PC-3 (cell line): ENCODE measurements at regions of chr15 and their contacts with region 1.

Region 1: DNA sequence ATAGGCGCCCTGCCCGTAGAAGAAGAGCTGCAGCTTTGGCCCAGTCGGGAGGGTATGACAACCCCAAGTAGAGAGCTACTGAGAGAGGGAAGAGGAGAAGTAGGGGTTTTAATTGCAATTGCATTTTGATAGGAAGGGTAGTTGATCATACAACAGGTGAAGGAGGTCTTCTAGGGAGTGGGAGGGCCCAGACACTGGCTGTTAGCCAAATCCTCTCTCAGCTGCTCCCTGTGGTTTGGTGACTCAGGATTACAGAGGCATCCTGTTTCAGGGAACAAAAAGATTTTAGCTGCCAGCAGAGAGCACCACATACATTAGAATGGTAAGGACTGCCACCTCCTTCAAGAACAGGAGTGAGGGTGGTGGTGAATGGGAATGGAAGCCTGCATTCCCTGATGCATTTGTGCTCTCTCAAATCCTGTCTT is 408.9 kb upstream of the THBS1 start:
- DNase-seq: peak; percentile 98
- ATAC-seq: peak; percentile 99
- H3K4me3 ChIP-seq: no peak overlapping the region
- H3K27ac ChIP-seq: peak overlapping the region; percentile 77
- H3K4me1 ChIP-seq: peaks cover 25% of the 10 kb centered on the region
- H3K27me3 ChIP-seq: no peaks in the 10 kb centered on the region
- CTCF ChIP-seq: peak; percentile 81

Region 2: DNA sequence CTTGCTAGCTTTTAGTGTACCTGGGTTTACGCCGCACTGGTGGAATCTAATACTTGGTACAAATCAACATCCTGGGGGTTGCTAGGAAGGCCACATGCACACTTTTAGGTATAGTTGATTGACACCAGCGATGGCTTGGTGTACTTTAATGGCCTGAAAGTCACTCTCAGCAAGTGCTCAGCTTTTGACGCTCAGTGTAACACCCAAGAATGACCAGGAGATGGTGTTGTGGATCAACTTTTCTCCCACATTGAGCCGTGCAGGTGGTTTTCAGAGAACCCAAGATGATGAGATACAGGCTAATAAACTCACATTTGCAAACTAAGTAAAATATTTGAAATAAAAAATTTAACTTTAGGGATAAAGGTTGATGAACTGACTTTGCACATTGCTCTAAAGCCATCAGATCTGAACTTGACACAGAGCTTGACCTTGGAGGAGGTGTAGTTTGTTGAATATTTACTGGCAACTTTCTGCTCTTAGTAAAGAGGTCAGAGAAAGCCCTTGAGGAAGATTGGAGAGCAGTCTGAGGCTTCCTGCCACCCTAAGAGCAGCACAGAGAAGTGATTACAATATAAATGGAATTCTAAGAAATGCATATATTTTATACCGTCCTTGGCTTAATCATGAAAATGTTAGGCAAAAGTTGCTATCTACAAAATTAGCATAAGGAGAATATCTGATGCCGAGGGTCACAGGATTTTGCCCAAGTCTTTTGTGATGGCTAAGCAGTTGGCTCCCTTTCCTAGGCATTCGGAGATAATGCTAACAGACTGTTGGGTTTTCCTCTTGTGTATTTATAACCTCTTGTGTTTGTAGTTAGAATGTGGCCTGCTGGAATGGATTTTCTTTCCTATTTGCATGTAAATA is 463.9 kb before region 1 on chr15:
- CTCF ChIA-PET with region 1: no interaction called
- POLR2A ChIA-PET with region 1: no interaction called
- intact Hi-C with region 1: loop called (anchors 2 kb)
- DNase-seq: peak; percentile 77
- ATAC-seq: peak; percentile 97
- H3K4me3 ChIP-seq: no peak overlapping the region
- H3K27ac ChIP-seq: no peak overlapping the region
- H3K4me1 ChIP-seq: no peaks in the 10 kb centered on the region
- H3K27me3 ChIP-seq: no peaks in the 10 kb centered on the region
- CTCF ChIP-seq: peak; percentile 84

Region 3: DNA sequence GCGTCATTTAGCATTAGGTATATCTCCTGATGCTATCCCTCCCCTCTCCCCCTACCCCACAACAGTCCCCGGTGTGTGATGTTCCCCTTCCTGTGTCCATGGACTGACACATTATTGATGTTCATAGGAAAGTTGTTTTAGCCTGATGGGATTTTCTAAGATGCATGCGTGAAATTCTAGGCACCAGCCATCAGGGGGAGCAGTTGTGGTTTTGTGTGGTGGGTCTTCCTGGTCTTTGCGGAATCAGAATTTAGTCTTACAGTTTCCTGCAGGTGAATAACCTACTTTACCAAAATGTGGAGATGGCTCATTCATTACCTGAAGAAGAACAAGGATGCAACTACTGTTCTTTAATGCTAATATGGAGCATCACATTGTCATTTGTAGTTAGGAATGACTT is 46.1 kb before region 1 on chr15:
- CTCF ChIA-PET with region 1: interaction called, 3 read pairs
- POLR2A ChIA-PET with region 1: no interaction called
- intact Hi-C with region 1: loop called (anchors 1 kb)
- DNase-seq: peak; percentile 78
- ATAC-seq: no peak
- H3K4me3 ChIP-seq: no peak overlapping the region
- H3K27ac ChIP-seq: peak overlapping the region; percentile 88
- H3K4me1 ChIP-seq: peaks cover 70% of the 10 kb centered on the region
- H3K27me3 ChIP-seq: no peaks in the 10 kb centered on the region
- CTCF ChIP-seq: peak; percentile 76

Region 4: DNA sequence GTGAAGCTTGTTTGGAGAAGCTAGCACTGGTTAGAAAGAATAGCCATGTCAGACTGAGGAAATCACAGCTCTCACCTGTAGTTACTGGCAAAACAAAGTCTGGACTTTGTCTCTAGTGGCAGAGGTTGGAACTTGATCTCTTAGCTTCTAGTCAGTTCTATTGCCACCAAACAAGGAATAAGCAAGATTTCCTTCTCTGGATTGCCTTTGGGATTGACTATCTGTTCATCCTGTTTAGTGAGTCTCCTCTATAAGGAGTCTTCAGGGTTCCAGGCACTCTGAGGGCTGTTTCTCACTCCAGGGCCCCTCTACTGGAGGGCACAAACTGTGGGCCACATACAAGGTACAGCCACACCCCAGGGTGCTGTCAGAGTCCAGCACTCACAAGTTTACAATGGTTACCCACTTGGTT is 17.7 kb before region 1 on chr15:
- CTCF ChIA-PET with region 1: interaction called, 13 read pairs
- POLR2A ChIA-PET with region 1: interaction called, 4 read pairs
- intact Hi-C with region 1: no loop called
- DNase-seq: peak; percentile 45
- ATAC-seq: peak; percentile 39
- H3K4me3 ChIP-seq: peak overlapping the region; percentile 38; the same call in 1 of the 2 replicates
- H3K27ac ChIP-seq: peak overlapping the region; percentile 54
- H3K4me1 ChIP-seq: peaks cover 29% of the 10 kb centered on the region
- H3K27me3 ChIP-seq: no peaks in the 10 kb centered on the region
- CTCF ChIP-seq: peak; percentile 43; the same call in 1 of the 2 replicates

Region 5: GRCh38 chr15:39188925-39189324 is 17.0 kb after region 1 on chr15:
- CTCF ChIA-PET with region 1: no interaction called
- POLR2A ChIA-PET with region 1: no interaction called
- intact Hi-C with region 1: no loop called
- DNase-seq: peak; percentile 97
- ATAC-seq: peak; percentile 62
- H3K4me3 ChIP-seq: no peak overlapping the region
- H3K27ac ChIP-seq: peak overlapping the region; percentile 89
- H3K4me1 ChIP-seq: peaks cover 75% of the 10 kb centered on the region
- H3K27me3 ChIP-seq: no peaks in the 10 kb centered on the region
- CTCF ChIP-seq: no peak

Region 6: DNA sequence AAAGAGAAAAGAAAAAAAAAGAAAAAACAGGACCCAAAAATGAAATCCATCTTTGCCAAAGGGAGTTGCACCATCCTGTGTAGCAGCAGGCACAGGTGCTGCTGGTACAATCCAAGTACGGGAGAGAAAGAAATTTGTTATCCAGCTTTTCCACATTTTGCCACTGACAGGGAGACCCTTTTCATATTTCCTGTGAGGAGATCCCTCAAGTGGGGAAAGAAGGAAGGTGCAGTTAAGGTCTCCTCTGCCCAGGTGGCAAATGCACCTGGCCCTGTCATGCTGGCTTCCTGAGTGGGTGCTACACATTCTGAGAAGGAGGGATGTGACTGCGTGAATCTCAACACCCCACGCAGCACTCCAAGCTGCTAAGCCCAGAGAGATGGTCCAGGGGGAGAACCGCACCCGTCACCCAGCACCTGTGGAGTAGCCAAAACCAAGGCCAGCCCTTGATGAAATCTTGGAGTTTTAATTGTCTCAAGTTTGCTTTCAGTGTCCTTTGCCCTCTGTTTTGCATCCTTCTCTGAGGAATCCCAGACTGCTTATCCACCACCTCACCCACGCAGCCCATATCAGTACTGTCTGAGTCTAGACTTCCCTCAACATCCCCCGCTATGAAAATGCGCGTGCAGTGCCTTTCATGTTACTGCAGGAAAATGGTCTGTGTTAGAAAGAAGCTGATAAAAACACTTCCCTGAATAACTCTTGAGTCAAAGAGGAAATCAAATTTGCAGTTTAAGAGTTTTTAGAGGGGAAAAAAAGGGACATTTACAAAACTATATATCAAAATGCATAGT is 267.0 kb after region 1 on chr15:
- CTCF ChIA-PET with region 1: interaction called, 3 read pairs
- POLR2A ChIA-PET with region 1: no interaction called
- intact Hi-C with region 1: loop called (anchors 5 kb)
- DNase-seq: peak; percentile 63
- ATAC-seq: peak; percentile 68
- H3K4me3 ChIP-seq: no peak overlapping the region
- H3K27ac ChIP-seq: no peak overlapping the region
- H3K4me1 ChIP-seq: 0 out of 2 replicates have a peak, but pooled peaks cover 4% of the 10 kb centered on the region
- H3K27me3 ChIP-seq: no peaks in the 10 kb centered on the region
- CTCF ChIP-seq: peak; percentile 58

Region 7: DNA sequence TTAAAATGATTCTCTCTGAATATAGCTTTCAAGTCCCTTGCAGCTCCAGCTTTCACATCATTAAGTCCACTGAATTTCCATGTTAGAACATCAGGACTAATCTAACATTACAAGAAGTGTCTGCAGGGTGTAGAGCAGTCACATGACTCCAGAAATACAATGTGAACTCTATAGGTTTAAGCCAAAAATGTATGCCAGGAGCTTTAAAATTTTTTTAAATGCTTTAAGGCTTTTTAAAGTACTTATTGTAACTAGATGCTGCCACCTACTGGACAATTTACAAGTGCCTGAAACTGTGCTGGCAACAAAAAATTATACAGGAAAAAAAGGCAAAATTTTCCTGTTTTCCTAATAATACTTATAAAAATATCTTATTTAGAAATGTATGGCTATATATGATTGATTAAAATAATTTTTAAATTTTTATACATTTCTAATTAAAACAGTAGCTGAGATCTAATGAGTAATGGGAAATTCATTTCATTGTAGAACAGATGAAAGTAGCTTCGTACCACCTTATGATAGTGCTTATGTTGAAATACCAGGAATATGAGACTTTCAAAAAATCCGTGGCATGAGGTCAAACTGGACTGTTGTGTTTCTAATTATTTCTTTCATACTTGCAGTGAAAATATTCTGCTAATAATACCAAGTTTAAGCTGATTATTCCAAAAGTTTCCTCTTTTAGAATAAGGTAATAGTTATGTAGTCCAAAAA is 585.0 kb after region 1 on chr15:
- CTCF ChIA-PET with region 1: no interaction called
- POLR2A ChIA-PET with region 1: no interaction called
- intact Hi-C with region 1: loop called (anchors 1 kb)
- DNase-seq: peak; percentile 79
- ATAC-seq: peak; percentile 46; the same call in 1 of the 2 replicates
- H3K4me3 ChIP-seq: no peak overlapping the region
- H3K27ac ChIP-seq: no peak overlapping the region
- H3K4me1 ChIP-seq: no peaks in the 10 kb centered on the region
- H3K27me3 ChIP-seq: no peaks in the 10 kb centered on the region
- CTCF ChIP-seq: peak; percentile 78